Panc1 (cell line): ENCODE measurements at regions of chr16 and their contacts with region 1.

Region 1: DNA sequence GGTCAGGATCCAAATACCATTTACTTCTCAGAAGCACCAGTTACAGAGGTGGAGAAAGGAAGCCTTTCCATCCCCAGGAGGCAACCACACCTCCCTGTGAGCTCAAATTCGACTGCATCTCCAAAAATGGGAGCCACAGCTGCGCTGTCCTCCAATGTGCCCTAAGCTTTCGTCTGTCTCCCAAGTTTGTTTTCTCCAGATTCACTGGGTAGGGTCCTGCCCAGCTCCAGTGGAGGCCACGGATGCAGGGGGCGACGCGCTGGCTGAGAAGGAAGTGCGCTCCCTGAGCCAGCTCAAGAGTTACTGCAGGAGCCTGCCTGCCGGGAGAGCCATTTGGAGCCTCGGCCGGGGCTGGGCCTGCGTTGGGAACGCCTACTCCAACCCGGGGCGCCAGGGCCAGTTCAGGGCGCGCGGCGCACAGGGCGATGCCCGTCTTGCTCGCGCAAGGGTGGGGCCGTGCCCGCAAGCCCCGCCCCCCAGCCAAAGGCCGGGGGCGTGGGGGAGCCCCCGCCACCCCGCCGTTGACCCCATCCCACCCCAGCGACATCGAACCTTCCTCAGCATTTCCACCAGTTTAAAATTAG is 19.5 kb downstream of the SIAH1 start:
- DNase-seq: peak; percentile 43
- ATAC-seq: peak; percentile 99
- H3K4me3 ChIP-seq: peak overlapping the region; percentile 56 to 77
- H3K27ac ChIP-seq: peak overlapping the region; percentile 93
- H3K4me1 ChIP-seq: peaks cover 26% of the 10 kb centered on the region
- H3K27me3 ChIP-seq: no peaks in the 10 kb centered on the region
- CTCF ChIP-seq: 0 out of 2 replicates have a peak, but pooled peaks have one; percentile 14

Region 2: DNA sequence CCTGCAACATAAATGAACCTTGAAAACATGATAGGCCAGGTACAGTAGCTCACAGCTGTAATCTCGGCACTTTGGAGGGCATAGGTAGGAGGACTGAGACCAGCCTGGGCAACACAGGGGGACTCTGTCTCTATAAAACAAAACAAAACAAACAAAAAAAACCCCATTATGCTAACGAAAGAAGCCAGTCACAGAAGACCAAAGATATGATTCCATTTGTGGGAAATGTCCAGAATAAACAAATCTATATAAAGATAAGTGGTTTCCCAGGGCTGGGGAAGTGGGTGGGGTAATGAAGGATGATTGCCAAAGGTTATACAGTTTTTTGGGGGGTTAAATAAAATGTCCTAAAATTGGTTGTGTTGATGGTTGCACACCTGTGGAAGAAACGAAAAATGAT is 56.1 kb after region 1 on chr16:
- CTCF ChIA-PET with region 1: no interaction called
- POLR2A ChIA-PET with region 1: no interaction called
- in situ Hi-C with region 1: no loop called
- intact Hi-C with region 1: no loop called
- DNase-seq: no peak
- ATAC-seq: no peak
- H3K4me3 ChIP-seq: no peak overlapping the region
- H3K27ac ChIP-seq: no peak overlapping the region
- H3K4me1 ChIP-seq: no peaks in the 10 kb centered on the region
- H3K27me3 ChIP-seq: no peaks in the 10 kb centered on the region
- CTCF ChIP-seq: no peak

Region 3: GRCh38 chr16:48632137-48632774 is 266.6 kb after region 1 on chr16:
- CTCF ChIA-PET with region 1: no interaction called
- POLR2A ChIA-PET with region 1: interaction called, 13 read pairs
- in situ Hi-C with region 1: no loop called
- intact Hi-C with region 1: loop called (anchors 5 kb)
- DNase-seq: no peak
- ATAC-seq: no peak
- H3K4me3 ChIP-seq: no peak overlapping the region
- H3K27ac ChIP-seq: no peak overlapping the region
- H3K4me1 ChIP-seq: no peaks in the 10 kb centered on the region
- H3K27me3 ChIP-seq: no peaks in the 10 kb centered on the region
- CTCF ChIP-seq: no peak

Region 4: DNA sequence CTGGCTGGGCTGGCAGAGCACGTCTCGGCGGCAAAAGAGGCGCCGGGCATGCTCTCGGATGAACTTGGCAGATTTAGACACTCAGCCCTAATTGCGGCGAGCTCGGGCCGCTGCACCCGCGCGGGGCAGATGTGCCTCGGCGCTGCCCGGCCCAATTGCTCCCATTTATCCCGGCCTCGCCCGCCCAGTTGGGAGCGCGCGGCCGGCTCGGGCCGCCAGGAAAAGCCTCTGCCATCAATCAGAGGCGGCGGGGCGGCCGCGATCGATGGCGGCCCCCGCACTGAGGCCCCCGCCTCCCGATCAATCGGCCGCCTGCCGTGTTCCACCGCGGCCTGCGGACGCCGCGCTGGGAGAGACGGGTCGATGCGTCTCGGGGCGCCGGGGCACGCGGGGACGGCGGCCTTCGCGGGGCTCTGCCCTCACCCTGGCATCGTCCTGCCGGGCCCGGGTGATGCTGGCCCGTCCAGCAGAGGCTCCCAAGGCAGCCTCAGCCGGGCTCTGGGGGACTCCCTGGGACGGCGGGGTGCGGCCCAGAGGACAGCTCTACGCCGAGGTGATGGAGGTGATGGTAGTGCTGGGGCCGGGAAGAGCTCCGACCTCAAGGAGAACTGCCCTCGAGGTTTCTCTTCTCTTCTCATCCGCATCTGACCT is 445.3 kb after region 1 on chr16:
- CTCF ChIA-PET with region 1: interaction called, 11 read pairs
- POLR2A ChIA-PET with region 1: no interaction called
- in situ Hi-C with region 1: no loop called
- intact Hi-C with region 1: no loop called
- DNase-seq: no peak
- ATAC-seq: no peak
- H3K4me3 ChIP-seq: no peak overlapping the region
- H3K27ac ChIP-seq: no peak overlapping the region
- H3K4me1 ChIP-seq: no peaks in the 10 kb centered on the region
- H3K27me3 ChIP-seq: no peaks in the 10 kb centered on the region
- CTCF ChIP-seq: no peak